T-cell (primary cell): ENCODE measurements at regions of chr6 and their contacts with region 1.

Region 1: GRCh38 chr6:2738373-2738979 is 12.2 kb downstream of the MYLK4 start:
- DNase-seq: peak in 33 of 35 experiments; percentile 12 to 72 (median 39)
- ATAC-seq: peak in 3 of 4 experiments; percentile 46 to 66 (median 61)
- H3K4me3 ChIP-seq: no peak overlapping the region
- H3K4me3 Mint-ChIP-seq: no peak overlapping the region
- H3K27ac ChIP-seq: no peak overlapping the region
- H3K27ac Mint-ChIP-seq: no peak overlapping the region
- H3K4me1 ChIP-seq: no peaks in the 10 kb centered on the region
- H3K4me1 Mint-ChIP-seq: peaks cover 0 to 4% (median 2%) of the 10 kb centered on the region in 3 donors
- H3K27me3 ChIP-seq: peaks cover 0 to 8% of the 10 kb centered on the region in 2 experiments
- H3K27me3 Mint-ChIP-seq: peaks cover 5% of the 10 kb centered on the region in 2 donors

Region 2: DNA sequence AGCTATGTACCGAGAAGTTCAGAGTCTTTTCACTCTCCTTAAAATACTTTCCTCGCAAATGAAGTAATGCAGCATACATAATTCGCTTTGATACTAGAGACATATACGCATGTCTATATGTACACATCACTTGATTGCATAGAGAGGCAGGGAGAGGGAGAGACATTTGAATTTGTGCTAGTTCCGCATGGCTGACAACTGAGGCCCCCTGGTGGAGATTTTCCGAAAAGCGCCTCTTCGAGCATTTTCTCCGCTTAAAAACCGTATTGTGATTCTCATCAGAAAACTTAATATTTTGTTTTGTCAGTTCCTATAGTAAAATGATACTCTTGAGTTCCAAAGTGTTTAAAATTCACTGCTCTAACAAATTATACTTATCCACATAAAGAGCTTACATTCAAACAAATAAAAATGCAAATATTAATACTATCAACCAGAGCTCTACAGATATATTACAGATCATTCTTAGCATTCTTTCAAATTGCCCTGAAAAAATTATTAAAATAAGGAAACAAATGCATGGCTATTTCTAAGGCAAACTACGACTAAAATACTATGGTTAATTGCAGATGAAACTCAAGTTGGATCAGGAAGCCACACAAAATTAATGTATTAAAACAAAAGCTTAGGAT is 11.6 kb after region 1 on chr6:
- CTCF ChIA-PET with region 1: interaction called, 4 to 38 read pairs
- POLR2A ChIA-PET with region 1: interaction called in 1 of 2 experiments, 3 read pairs
- DNase-seq: peak in 34 of 35 experiments; percentile 29 to 80 (median 58)
- ATAC-seq: peak; percentile 46 to 70 (median 65)
- H3K4me3 ChIP-seq: no peak overlapping the region
- H3K4me3 Mint-ChIP-seq: no peak overlapping the region
- H3K27ac ChIP-seq: no peak overlapping the region
- H3K27ac Mint-ChIP-seq: no peak overlapping the region
- H3K4me1 ChIP-seq: peaks cover 0 to 2% of the 10 kb centered on the region in 2 experiments
- H3K4me1 Mint-ChIP-seq: peaks cover 5 to 9% (median 8%) of the 10 kb centered on the region in 3 donors
- H3K27me3 ChIP-seq: no peaks in the 10 kb centered on the region
- H3K27me3 Mint-ChIP-seq: peaks cover 14 to 23% of the 10 kb centered on the region in 2 donors

Region 3: GRCh38 chr6:2756687-2757224 is 18.3 kb after region 1 on chr6:
- CTCF ChIA-PET with region 1: interaction called, 3 to 38 read pairs
- POLR2A ChIA-PET with region 1: interaction called in 1 of 2 experiments, 3 read pairs
- DNase-seq: no peak
- ATAC-seq: no peak
- H3K4me3 ChIP-seq: no peak overlapping the region
- H3K4me3 Mint-ChIP-seq: no peak overlapping the region
- H3K27ac ChIP-seq: no peak overlapping the region
- H3K27ac Mint-ChIP-seq: no peak overlapping the region
- H3K4me1 ChIP-seq: peaks cover 0 to 2% of the 10 kb centered on the region in 2 experiments
- H3K4me1 Mint-ChIP-seq: peaks cover 10 to 13% (median 11%) of the 10 kb centered on the region in 3 donors
- H3K27me3 ChIP-seq: peaks cover 0 to 3% of the 10 kb centered on the region in 2 experiments
- H3K27me3 Mint-ChIP-seq: peaks cover 17 to 22% of the 10 kb centered on the region in 2 donors